Gastrocnemius medialis (tissue), 4 donors: ENCODE measurements at regions of chr19 and their contacts with region 1.

Region 1: DNA sequence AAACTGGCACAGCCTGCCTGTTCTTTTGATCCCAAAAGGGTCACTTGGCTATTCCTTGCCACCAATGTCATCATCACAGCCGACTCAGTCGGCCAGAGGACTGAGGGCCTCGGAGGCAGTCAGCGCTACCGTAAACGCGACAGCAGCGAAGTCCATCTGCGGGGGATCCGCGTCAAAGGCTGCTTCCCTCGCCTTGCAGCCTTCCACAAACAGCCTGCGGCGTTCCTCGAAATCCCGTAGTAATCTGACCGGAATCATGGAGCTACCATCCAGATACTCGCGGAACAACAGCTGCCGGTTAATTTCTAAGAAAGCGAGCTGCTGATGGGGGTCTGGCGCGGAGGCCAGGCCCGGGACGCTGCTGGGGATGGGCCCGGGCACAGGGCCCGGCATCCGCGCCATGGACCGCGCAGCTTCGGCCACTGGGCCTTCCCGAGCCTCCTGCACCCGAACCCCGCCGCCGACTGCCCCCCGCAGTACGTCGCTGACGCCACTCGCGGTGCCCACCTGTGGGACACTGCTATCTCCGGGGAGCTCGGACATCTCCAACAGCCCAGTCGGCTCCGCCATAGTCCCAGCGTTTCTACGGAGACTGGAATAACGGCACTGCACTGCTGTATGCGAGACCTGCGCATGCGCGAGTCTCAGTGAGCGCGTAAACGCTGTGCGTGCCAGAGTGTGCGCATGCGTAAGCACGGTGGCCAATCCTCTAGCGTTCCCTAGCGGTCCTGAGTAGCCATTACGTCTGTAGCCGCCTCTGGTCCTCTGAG is at the start of gene EID2B:
- DNase-seq: peak; percentile 91 to 92
- ATAC-seq: peak; percentile 100
- H3K4me3 ChIP-seq: peak within 1 kb of the TSS; percentile 74 to 90 (median 84)
- H3K27ac ChIP-seq: peak within 1 kb of the TSS; percentile 74 to 86 (median 83)
- H3K4me1 ChIP-seq: peaks cover 11 to 17% of the 10 kb centered on the region in 2 donors
- H3K27me3 ChIP-seq: no peaks in the 10 kb centered on the region
- CTCF ChIP-seq: peak; percentile 98 to 99 (median 99)
- POLR2A ChIP-seq: peak; percentile 41 to 48
- total RNA-seq, gene EID2B: 0.91 to 6.5 (median 1.2) TPM

Region 2: DNA sequence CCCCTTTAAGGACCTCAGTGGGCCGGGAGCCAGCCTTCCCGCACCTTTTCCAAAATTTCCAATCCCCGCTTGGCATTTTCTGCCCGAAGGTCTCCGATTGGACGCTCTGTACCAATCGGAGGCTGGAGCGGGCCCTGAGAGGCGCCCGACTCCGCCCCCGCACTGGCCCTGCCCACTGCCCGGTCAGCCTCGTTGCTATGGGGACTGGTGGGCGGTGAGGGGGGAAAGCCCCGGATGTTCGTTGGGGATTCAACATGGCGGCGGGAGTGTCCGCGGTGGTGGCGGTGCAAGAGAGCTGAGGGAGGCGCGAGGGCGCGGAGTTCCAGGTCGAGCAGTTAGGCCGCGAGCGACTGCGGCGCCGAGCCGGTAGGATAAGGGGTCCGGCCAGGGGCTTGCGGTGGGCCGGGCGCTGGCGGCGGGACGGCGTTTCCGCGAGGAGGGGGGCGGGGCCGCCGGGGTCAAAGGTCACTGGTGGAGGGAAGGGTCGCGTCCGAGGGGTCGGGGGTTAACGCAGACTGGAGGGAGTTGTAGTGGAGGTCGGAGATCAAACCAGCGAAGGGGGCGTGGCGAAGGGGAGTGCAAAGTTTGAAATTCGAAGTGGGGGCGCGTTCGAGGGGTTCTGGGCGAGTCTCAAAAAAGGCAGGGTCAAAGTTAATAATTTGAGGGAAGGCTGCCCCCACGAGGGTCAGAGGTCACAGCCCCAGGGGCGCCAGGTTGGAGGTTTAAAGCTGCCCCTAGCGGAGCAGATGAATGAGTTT is 406.7 kb before region 1 on chr19 and contains the start of gene PAK4:
- in situ Hi-C with region 1: loop called in 2 of 4 experiments (anchors 25 kb)
- intact Hi-C with region 1: loop called (anchors 5 kb)
- DNase-seq: peak; percentile 97 to 98
- ATAC-seq: peak; percentile 98
- H3K4me3 ChIP-seq: peak within 1 kb of the TSS; percentile 73 to 96 (median 82)
- H3K27ac ChIP-seq: peak within 1 kb of the TSS; percentile 76 to 90 (median 80)
- H3K4me1 ChIP-seq: peaks cover 13 to 29% of the 10 kb centered on the region in 2 donors
- H3K27me3 ChIP-seq: peaks cover 0 to 4% (median 3%) of the 10 kb centered on the region in 3 donors
- CTCF ChIP-seq: no peak
- POLR2A ChIP-seq: peak; percentile 30 to 47
- total RNA-seq, gene PAK4: 4.7 to 11.7 (median 8.3) TPM

Region 3: GRCh38 chr19:39397360-39398296 is 134.8 kb before region 1 on chr19:
- in situ Hi-C with region 1: no loop called
- intact Hi-C with region 1: loop called (anchors 2 kb)
- DNase-seq: peak; percentile 66 to 92
- ATAC-seq: peak; percentile 75 to 80
- H3K4me3 ChIP-seq: peak overlapping the region in 2 of 4 donors; percentile 5 to 37
- H3K27ac ChIP-seq: peak overlapping the region; percentile 90 to 100 (median 98)
- H3K4me1 ChIP-seq: peaks cover 22 to 28% of the 10 kb centered on the region in 2 donors
- H3K27me3 ChIP-seq: no peaks in the 10 kb centered on the region
- CTCF ChIP-seq: peak; percentile 97 to 100 (median 99)
- POLR2A ChIP-seq: peak in 1 of 2 donors; percentile 13

Region 4: GRCh38 chr19:39445265-39446111 is 86.9 kb before region 1 on chr19 and contains the start of gene SUPT5H:
- in situ Hi-C with region 1: loop called in 1 of 4 experiments (anchors 25 kb)
- intact Hi-C with region 1: no loop called
- DNase-seq: peak; percentile 96 to 97
- ATAC-seq: peak; percentile 96 to 99
- H3K4me3 ChIP-seq: peak within 1 kb of the TSS; percentile 74 to 99 (median 86)
- H3K27ac ChIP-seq: peak within 1 kb of the TSS; percentile 89 to 98 (median 94)
- H3K4me1 ChIP-seq: peaks cover 14 to 27% of the 10 kb centered on the region in 2 donors
- H3K27me3 ChIP-seq: no peaks in the 10 kb centered on the region
- CTCF ChIP-seq: no peak
- POLR2A ChIP-seq: peak; percentile 89 to 95
- total RNA-seq, gene SUPT5H: 60.7 to 148 (median 108) TPM

Region 5: GRCh38 chr19:39480337-39481228 is 51.8 kb before region 1 on chr19 and contains the start of gene TIMM50:
- in situ Hi-C with region 1: loop called in 2 of 4 experiments (anchors 5 kb)
- intact Hi-C with region 1: loop called (anchors 2 kb)
- DNase-seq: peak; percentile 91 to 97
- ATAC-seq: peak; percentile 97 to 98
- H3K4me3 ChIP-seq: peak within 1 kb of the TSS; percentile 92 to 100 (median 99)
- H3K27ac ChIP-seq: peak within 1 kb of the TSS; percentile 88 to 95 (median 92)
- H3K4me1 ChIP-seq: peaks cover 11% of the 10 kb centered on the region in 2 donors
- H3K27me3 ChIP-seq: no peaks in the 10 kb centered on the region
- CTCF ChIP-seq: no peak
- POLR2A ChIP-seq: peak; percentile 44 to 71
- total RNA-seq, gene TIMM50: 66.9 to 97.6 (median 85.6) TPM

Region 6: GRCh38 chr19:39602261-39602660 is 69.8 kb after region 1 on chr19 and contains the start of gene LGALS13:
- in situ Hi-C with region 1: no loop called
- intact Hi-C with region 1: no loop called
- DNase-seq: no peak
- ATAC-seq: no peak
- H3K4me3 ChIP-seq: no peak within 1 kb of the TSS
- H3K27ac ChIP-seq: no peak within 1 kb of the TSS
- H3K4me1 ChIP-seq: no peaks in the 10 kb centered on the region
- H3K27me3 ChIP-seq: peaks cover 0 to 4% (median 2%) of the 10 kb centered on the region in 3 donors
- CTCF ChIP-seq: no peak
- POLR2A ChIP-seq: no peak
- total RNA-seq, gene LGALS13: not detected

Region 7: DNA sequence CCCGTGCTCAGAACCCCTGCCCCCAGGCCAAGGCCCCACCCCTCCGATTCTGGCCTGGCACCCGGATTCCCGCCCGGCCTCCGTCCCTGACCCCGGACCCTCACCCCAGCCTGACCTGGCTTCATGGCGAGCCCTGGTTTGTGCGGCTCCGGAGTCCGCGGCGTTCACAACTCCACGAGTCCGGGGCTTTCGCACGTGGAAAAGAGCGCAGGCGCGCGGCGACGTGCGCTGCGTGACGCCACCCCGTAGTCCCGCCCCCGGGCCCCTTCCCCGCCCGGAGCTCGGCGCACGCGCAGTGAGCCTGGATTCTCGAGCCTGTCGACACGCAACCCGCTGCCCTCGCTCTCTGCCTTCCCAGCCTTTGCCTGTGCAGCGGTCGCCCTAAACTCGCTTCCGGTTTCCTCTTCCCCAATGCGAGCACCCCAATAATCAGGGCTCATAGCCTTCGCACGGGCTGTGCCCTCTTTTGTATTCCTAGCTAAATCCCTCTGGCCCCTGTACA is 313.8 kb after region 1 on chr19 and contains the start of gene FBL:
- in situ Hi-C with region 1: loop called in 1 of 4 experiments (anchors 25 kb)
- intact Hi-C with region 1: no loop called
- DNase-seq: peak; percentile 86 to 93
- ATAC-seq: peak; percentile 88 to 91
- H3K4me3 ChIP-seq: peak within 1 kb of the TSS; percentile 78 to 99 (median 88)
- H3K27ac ChIP-seq: peak within 1 kb of the TSS; percentile 93 to 96 (median 96)
- H3K4me1 ChIP-seq: peaks cover 38 to 50% of the 10 kb centered on the region in 2 donors
- H3K27me3 ChIP-seq: no peaks in the 10 kb centered on the region
- CTCF ChIP-seq: no peak
- POLR2A ChIP-seq: peak; percentile 72 to 75
- total RNA-seq, gene FBL: 40.4 to 79.4 (median 67.0) TPM